ENCODE measurements at regions of chr14 and their contacts with region 1.

Region 1: DNA sequence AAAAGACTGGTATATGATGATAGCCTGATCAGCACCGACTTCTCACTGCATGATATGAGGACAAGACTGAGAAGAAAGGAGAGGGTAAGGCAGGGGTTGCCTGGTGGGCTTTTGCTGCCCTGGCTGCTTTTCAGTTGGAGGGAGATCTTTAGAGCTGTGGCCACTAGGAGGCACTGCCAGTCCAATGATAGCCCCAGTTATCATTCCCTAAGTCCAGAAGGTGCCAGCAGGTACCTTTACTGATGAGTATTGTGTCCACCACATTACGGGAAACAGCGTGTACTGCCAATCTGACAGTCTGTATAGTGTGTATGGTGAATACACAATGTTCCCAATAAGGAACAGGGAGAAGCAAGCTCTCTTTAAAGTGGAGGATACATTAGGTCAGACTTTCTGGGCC is 55.8 kb upstream of the CCDC175 start:
- DNase-seq: peak; percentile 39
- H3K4me3 Mint-ChIP-seq: no peak overlapping the region
- H3K27ac Mint-ChIP-seq: no peak overlapping the region
- H3K4me1 Mint-ChIP-seq: peaks cover 2% of the 10 kb centered on the region
- H3K27me3 Mint-ChIP-seq: peaks cover 44% of the 10 kb centered on the region

Region 2: GRCh38 chr14:59688224-59689170 is 56.1 kb after region 1 on chr14:
- CTCF ChIA-PET with region 1: interaction called, 9 read pairs
- intact Hi-C with region 1: loop called (anchors 5 kb)
- DNase-seq: peak; percentile 65
- H3K4me3 Mint-ChIP-seq: no peak overlapping the region
- H3K27ac Mint-ChIP-seq: no peak overlapping the region
- H3K4me1 Mint-ChIP-seq: no peaks in the 10 kb centered on the region
- H3K27me3 Mint-ChIP-seq: peaks cover 33% of the 10 kb centered on the region

Region 3: GRCh38 chr14:59897761-59898383 is 265.5 kb after region 1 on chr14:
- CTCF ChIA-PET with region 1: interaction called, 17 read pairs
- intact Hi-C with region 1: loop called (anchors 2 kb)
- DNase-seq: peak; percentile 10
- H3K4me3 Mint-ChIP-seq: no peak overlapping the region
- H3K27ac Mint-ChIP-seq: no peak overlapping the region
- H3K4me1 Mint-ChIP-seq: no peaks in the 10 kb centered on the region
- H3K27me3 Mint-ChIP-seq: peaks cover 14% of the 10 kb centered on the region

Region 4: DNA sequence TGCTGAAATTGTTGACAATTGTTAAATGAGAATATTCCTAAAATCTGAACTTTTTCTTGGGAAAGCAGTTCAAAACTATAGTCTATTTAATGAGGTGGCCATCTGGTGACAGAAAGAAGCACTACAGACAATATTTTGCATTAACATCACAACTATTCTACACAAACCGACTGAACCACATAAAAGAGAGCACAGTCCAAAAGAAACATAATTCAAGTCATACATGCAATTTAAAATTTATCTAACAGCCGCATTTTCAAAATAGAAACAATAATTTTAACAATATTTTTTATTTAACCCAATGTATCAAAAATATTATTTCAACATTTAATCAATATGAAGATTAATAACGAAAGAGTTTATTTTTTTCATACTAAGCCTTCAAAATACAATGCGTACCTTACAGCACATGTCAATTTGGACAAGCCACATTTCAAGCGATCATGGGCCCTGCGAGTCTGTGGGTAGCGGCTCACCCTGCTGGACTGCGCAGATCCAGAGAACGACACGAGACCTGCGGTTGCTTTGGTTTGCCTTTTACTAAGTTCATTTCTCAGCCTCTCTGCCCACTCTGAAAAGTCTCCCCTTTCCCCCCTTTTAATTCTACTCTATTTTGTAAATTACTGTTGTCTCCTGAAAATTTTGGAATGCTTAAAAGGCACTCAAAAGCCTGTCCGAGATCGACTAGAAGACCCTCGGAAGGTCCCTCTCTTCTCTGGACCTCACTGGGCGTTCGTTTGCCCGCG is 286.6 kb after region 1 on chr14:
- CTCF ChIA-PET with region 1: interaction called, 4 read pairs
- intact Hi-C with region 1: loop called (anchors 1 kb)
- DNase-seq: peak; percentile 27
- H3K4me3 Mint-ChIP-seq: peak overlapping the region; percentile 54
- H3K27ac Mint-ChIP-seq: no peak overlapping the region
- H3K4me1 Mint-ChIP-seq: peaks cover 7% of the 10 kb centered on the region
- H3K27me3 Mint-ChIP-seq: peaks cover 43% of the 10 kb centered on the region

Region 5: DNA sequence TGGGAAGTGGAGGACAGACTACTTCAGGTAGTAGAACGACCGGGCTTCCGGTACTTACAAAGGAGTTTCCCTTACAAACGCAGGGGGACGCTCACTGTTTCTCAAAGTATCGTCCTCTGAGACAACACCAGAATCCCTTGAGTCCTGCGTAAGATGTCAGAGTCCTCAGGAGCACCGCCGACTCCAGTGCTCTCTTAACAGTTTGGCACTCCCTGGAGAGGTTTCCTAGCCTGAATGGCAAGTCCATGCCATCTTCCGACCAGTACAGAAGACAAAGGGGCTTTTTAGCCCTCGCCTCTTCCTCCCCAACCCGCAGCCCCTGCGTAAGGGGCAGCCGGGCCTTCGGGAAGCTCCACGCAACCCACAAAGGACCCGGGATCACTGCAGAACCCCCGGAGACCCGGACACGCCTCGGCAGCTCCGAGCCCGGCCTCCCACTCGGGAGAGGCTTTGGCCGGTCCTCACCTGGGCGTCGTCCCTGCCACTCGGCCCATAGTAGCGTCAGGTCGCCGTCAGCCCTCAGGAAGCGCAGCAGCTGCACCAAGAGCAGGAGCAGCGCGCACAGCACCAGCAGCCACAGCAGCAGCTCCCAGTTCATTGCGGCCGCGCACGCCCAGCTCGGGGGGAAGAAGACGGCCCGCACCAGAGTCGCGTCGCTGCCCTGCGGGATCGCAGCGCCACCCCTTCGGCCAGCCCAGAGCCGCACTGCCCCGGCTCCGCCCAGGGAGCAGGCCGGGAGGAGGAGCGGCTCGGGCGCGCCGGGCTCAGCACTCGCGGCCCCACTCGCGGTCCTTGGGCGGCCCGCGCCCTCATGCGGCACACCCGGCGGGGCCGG is 532.5 kb after region 1 on chr14 and contains the start of gene DHRS7:
- CTCF ChIA-PET with region 1: no interaction called
- intact Hi-C with region 1: loop called (anchors 5 kb)
- DNase-seq: peak; percentile 65
- H3K4me3 Mint-ChIP-seq: peak within 1 kb of the TSS; percentile 89
- H3K27ac Mint-ChIP-seq: peak within 1 kb of the TSS; percentile 96
- H3K4me1 Mint-ChIP-seq: peaks cover 39% of the 10 kb centered on the region
- H3K27me3 Mint-ChIP-seq: no peaks in the 10 kb centered on the region
- total RNA-seq, gene DHRS7: 40.5 to 43.4 TPM

Region 6: DNA sequence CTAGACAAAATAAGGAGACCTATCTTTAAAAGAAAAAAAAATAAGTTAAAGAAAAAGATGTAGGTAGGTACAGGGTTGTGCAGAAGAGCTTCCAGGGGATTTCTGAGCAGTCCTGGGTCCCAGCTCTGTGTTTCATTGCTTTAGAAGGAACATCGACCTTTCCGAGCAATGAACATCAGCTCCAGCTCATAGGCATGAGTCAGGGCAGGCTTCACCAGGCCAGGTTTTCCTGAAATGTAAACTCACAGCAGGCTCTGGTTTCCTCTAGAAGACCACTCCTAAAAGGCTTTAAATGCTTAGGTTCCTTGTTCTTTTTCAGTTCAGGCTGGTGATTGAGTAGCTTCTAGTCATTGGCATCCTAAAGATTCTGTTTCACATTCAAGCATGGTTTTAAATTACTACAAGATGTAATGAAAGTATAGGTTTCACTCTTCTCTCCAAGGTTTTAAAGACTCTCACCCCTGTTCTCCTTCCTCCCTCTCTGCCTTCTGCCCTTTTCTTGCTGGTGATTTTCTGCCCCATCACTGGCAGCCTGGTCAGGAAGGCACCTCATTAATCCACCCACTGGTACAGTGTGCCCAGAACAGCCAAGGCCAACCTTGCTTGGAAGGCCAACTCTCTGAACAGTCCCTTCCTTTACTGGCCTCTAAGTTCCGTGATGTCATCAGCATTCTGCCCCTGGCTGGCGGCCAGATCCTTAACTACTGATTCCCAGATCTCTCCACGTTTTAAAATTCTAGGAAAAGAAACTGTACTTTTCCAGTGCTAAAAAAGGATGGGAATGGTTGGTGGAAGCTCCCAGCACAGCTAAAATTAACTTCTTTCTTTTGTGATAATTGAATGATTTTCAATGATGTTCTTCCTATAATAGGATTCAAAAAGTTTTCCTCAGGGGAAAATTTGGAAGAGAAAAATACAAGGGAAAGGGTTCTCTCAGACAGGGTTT is 1953.5 kb after region 1 on chr14:
- CTCF ChIA-PET with region 1: no interaction called
- intact Hi-C with region 1: no loop called
- DNase-seq: no peak
- H3K4me3 Mint-ChIP-seq: no peak overlapping the region
- H3K27ac Mint-ChIP-seq: no peak overlapping the region
- H3K4me1 Mint-ChIP-seq: peaks cover 36% of the 10 kb centered on the region
- H3K27me3 Mint-ChIP-seq: no peaks in the 10 kb centered on the region

Measured in activated naive CD4-positive, alpha-beta T cell treated with anti-CD3 and anti-CD28 coated beads for 36 hours (primary cell).